ENCODE measurements at regions of chr16 and their contacts with region 1.

Region 1: GRCh38 chr16:84970447-84971127 is 40.7 kb downstream of the ZDHHC7 start:
- DNase-seq: peak; percentile 82 to 89
- ATAC-seq: peak; percentile 85 to 94
- H3K4me3 ChIP-seq: no peak overlapping the region
- H3K27ac ChIP-seq: peak overlapping the region; percentile 18 to 82; a peak in 5 of 6 replicates
- H3K4me1 ChIP-seq: peaks cover 15% of the 10 kb centered on the region
- CTCF ChIP-seq: peak; percentile 94
- EP300 ChIP-seq: no peak
- POLR2A ChIP-seq: no peak
- RAD21 ChIP-seq: peak; percentile 95

Region 2: GRCh38 chr16:84672276-84673202 is 298.0 kb before region 1 on chr16:
- CTCF ChIA-PET with region 1: interaction called, 13 read pairs
- POLR2A ChIA-PET with region 1: no interaction called
- DNase-seq: peak; percentile 68 to 88
- ATAC-seq: peak; percentile 88 to 95
- H3K4me3 ChIP-seq: no peak overlapping the region
- H3K27ac ChIP-seq: no peak overlapping the region
- H3K4me1 ChIP-seq: no peaks in the 10 kb centered on the region
- CTCF ChIP-seq: peak; percentile 89
- EP300 ChIP-seq: no peak
- POLR2A ChIP-seq: no peak
- RAD21 ChIP-seq: peak; percentile 62 to 74

Region 3: DNA sequence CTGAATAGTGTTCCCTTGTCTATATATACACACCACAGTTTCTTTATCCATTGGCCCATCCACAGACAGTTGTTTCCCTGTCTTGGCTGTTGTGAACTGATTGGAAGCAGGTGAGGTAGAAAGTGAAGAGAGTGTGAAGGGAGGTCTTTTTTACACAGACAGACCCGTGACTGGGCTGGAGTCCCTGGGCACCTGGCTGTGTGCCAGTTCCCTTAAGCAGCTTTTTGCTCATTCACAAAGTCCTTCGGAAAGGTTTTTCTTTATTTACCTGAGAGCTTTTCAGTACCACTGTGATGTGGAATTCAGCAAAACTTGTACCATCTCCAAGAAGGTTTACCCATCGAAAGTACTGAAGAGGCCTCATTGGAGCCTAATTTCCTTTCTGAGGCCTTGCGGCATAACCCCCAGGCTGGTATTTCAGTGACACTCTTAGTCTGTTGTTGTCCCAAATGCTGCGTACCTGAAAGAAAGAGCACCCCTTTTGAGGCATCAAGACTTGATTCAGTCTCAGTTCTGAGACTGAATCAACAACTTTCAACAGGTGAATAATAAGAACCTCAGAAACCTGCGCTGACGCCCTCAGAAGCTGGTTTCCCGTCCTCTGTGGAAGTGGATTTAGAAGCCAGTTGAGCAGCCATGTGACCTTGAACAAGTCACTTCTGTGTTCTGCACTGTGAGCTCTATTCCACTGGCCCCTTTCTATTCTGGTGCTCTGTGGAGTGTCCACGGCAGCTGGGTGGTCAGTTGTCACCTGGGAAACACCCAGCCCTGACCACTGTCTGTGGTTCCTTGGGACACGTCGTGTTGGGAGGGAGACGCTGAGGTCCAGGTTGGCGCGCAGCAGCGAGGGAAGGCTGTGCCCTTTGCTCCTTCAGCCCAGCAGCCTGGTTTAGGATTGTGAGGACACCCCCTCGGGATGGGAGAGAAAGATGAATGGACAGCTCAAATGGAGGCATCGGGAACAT is 204.7 kb before region 1 on chr16:
- CTCF ChIA-PET with region 1: interaction called, 452 read pairs
- POLR2A ChIA-PET with region 1: no interaction called
- DNase-seq: no peak
- ATAC-seq: no peak
- H3K4me3 ChIP-seq: no peak overlapping the region
- H3K27ac ChIP-seq: no peak overlapping the region
- H3K4me1 ChIP-seq: no peaks in the 10 kb centered on the region
- CTCF ChIP-seq: no peak
- EP300 ChIP-seq: no peak
- POLR2A ChIP-seq: no peak
- RAD21 ChIP-seq: no peak

Region 4: GRCh38 chr16:84925092-84925772 is 45.4 kb before region 1 on chr16:
- CTCF ChIA-PET with region 1: interaction called, 69 read pairs
- POLR2A ChIA-PET with region 1: no interaction called
- DNase-seq: peak; percentile 48 to 60
- ATAC-seq: peak; percentile 67 to 90; a peak in 5 of 6 replicates
- H3K4me3 ChIP-seq: no peak overlapping the region
- H3K27ac ChIP-seq: no peak overlapping the region
- H3K4me1 ChIP-seq: peaks cover 5% of the 10 kb centered on the region; the same call in 1 of the 3 replicates
- CTCF ChIP-seq: peak; percentile 86
- EP300 ChIP-seq: no peak
- POLR2A ChIP-seq: no peak
- RAD21 ChIP-seq: peak; percentile 81 to 82

Region 5: GRCh38 chr16:84982434-84982833 is 11.8 kb after region 1 on chr16:
- CTCF ChIA-PET with region 1: interaction called, 49 read pairs
- POLR2A ChIA-PET with region 1: no interaction called
- DNase-seq: no peak
- ATAC-seq: no peak
- H3K4me3 ChIP-seq: no peak overlapping the region
- H3K27ac ChIP-seq: no peak overlapping the region; a peak in 1 of 6 replicates
- H3K4me1 ChIP-seq: peaks cover 23% of the 10 kb centered on the region
- CTCF ChIP-seq: no peak
- EP300 ChIP-seq: no peak
- POLR2A ChIP-seq: no peak
- RAD21 ChIP-seq: no peak

Region 6: DNA sequence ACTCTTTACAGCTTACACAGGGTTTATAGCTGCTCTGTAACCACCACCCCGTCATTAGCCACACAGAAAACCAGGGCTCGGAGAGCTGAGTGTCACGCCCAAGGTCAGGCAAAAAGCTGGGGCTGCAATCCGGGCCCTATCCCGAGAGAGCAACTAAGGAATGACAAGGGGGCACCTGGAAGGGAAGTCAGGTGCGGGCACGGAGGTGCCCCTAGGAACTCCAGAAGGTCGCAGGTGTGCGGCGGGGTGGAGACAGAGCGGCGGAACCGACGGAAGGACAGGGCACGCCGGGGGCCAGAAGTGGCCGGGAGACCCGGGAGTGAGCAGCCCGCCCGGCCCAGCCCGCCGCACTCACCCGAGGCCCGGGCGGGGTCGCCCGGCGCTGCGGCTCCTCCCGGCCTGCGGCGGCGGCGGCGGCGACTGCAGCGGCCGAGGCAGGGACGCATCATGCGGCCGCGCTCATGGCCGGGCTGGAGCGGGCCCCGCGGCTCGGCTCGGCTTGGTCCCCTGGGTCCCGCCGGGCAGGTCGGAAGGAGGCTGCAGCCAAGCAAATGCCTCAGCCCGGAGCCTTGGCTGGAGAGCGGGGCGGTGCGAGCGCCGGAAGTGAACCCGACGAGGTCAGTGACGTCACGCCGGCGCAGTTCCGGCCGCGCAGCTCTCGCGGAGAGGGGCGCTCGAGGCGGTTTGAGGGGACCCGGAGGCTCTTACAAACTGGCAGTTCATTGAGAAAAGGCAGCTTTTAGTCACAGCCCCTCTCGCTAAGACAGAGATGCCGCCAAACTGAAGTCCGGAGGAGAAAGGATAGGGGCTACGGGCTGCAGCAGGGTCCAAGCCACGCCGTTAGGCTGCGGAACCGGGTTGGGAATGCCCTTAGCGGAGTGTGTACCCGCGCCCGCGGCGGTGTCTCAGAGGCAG is 40.6 kb after region 1 on chr16 and contains the start of gene ZDHHC7:
- CTCF ChIA-PET with region 1: interaction called, 12 read pairs
- POLR2A ChIA-PET with region 1: interaction called, 4 read pairs
- DNase-seq: peak; percentile 85 to 88
- ATAC-seq: peak; percentile 96 to 98
- H3K4me3 ChIP-seq: peak within 1 kb of the TSS; percentile 87
- H3K27ac ChIP-seq: peak within 1 kb of the TSS; percentile 99
- H3K4me1 ChIP-seq: peaks cover 32% of the 10 kb centered on the region
- CTCF ChIP-seq: no peak
- EP300 ChIP-seq: 0 out of 5 replicates have a peak, but pooled peaks of 1 of the 2 experiments have one; percentile 20
- POLR2A ChIP-seq: peak; percentile 89
- RAD21 ChIP-seq: peak in 1 of 2 experiments; percentile 22; a peak in 2 of 5 replicates
- polyA plus RNA-seq, gene ZDHHC7: 58.0 and 88.6 TPM in 2 replicates

Region 7: DNA sequence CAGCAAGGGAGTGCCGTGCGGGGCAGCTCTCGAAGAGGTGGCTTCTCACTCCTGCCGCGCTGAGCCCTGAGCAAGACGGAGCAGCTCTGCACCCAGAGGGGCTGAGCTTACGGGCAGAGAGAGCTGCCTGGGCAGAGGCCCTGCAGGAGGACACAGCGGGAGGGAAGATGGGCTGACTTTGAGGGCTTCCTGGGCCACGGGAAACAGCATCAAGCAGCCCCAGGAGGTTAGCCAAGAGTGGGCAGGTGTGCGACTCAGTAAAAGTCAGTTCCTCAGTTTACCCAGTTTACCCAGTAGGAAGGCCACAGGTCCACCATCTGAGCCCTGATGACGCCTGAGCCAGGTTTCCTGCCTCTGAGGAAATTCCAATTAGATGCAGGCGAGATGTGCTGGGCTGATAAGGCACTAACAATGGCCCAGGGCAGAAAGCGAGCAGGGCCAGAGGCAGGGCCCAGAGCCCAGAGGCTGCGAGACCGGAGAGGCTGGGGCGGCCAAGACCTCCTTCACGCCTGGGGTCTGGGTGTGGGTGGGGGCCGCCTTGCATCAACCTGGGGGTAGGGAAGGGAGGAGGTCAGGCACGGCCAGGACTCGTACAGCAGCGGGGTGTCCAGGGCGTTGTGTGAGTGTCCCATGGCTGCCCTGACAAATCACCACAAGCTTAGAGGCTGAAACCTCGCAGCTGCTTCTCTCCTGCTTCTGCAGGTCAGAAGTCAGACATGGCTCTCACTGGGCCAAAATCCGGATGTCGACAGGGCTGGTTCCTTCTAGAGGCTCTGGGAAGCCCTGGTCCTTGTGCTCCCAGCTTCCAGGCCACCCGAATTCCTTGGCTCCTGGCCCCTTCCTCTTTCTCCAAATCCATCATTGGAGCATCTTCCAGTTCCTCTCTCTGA is 173.7 kb after region 1 on chr16:
- CTCF ChIA-PET with region 1: no interaction called
- POLR2A ChIA-PET with region 1: no interaction called
- DNase-seq: no peak
- ATAC-seq: no peak; a peak in 1 of 6 replicates
- H3K4me3 ChIP-seq: no peak overlapping the region
- H3K27ac ChIP-seq: no peak overlapping the region
- H3K4me1 ChIP-seq: 0 out of 3 replicates have a peak, but pooled peaks cover 7% of the 10 kb centered on the region
- CTCF ChIP-seq: no peak
- EP300 ChIP-seq: no peak
- POLR2A ChIP-seq: no peak
- RAD21 ChIP-seq: no peak

Region 8: DNA sequence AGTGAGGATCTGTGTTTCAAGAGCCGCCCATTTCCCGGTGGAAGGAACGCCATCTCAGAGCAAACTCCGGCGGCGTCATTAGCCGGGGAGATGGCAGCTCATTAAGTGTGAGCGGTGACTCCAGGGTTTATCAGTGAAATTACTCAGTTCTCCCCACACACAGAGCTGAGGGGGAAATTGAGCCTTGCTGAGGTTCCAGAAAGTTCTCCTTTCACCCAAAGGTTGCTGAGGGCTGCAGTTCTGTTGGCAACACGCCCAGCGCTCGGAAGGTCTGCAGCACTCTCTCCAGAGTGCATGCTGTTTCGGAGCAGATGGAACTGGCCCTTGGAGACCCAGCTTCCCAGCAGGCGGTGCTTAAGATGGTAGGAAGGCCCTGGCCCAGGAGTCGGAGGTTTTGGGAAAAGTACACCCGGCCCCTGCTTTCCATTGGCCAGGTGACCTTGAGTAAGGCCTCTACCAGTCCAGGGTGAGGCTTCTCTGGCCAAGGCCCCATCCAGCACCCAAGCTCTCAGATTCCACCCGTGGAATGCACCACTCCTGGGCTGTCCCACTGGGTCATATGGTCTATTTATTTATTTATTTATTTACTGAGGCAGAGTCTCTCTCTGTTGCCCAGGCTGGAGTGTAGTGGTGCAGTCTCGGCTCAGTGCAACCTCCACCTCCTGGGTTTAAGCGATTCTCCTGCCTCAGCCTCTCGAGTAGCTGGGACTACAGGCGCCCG is 309.4 kb after region 1 on chr16:
- CTCF ChIA-PET with region 1: no interaction called
- POLR2A ChIA-PET with region 1: no interaction called
- DNase-seq: no peak
- ATAC-seq: no peak
- H3K4me3 ChIP-seq: no peak overlapping the region
- H3K27ac ChIP-seq: no peak overlapping the region
- H3K4me1 ChIP-seq: no peaks in the 10 kb centered on the region
- CTCF ChIP-seq: no peak
- EP300 ChIP-seq: no peak
- POLR2A ChIP-seq: no peak
- RAD21 ChIP-seq: no peak

Measured in A549 (cell line).